GM10248 (cell line): ENCODE measurements at regions of chr14 and their contacts with region 1.

Region 1: GRCh38 chr14:66403183-66403582 is 83.0 kb upstream of the CCDC196 start:
- DNase-seq: peak; percentile 11
- CTCF ChIP-seq: peak; percentile 49

Region 2: DNA sequence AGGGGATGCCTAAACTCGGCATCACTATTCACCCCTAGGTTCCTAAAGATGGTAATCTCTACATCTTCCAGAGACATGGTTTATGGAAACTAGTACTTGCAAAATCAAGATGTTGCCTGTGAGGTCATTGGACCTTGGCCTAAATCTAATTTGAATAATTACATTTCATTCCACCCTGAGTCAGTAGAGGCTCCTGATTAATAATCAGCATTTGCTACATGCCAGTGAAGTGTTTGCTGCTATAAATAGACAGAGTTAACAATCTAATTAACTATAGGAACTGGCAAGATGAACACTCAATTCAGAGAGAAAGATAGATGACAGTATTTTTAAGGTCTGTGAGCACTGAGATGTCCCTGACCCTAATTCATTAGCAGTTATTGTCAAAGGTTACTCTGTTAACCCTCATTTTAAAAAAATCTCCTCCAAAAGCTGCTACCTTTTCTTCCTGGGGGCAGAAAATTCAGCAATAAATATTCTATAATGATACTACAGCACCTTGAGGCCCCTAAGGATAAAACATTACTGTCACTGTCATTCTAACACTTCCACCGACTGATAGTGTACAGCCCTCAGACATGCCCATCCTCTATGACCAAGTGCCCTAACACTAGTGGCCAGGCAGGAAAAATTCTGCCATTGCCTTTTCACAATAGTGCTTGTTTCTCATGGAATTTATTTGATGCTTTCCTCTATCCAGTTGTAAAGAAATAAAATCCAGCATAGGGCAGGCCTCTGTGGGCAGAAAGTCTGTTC is 17.2 kb after region 1 on chr14:
- CTCF ChIA-PET with region 1: interaction called, 25 read pairs
- POLR2A ChIA-PET with region 1: no interaction called
- DNase-seq: no peak
- CTCF ChIP-seq: no peak

Region 3: DNA sequence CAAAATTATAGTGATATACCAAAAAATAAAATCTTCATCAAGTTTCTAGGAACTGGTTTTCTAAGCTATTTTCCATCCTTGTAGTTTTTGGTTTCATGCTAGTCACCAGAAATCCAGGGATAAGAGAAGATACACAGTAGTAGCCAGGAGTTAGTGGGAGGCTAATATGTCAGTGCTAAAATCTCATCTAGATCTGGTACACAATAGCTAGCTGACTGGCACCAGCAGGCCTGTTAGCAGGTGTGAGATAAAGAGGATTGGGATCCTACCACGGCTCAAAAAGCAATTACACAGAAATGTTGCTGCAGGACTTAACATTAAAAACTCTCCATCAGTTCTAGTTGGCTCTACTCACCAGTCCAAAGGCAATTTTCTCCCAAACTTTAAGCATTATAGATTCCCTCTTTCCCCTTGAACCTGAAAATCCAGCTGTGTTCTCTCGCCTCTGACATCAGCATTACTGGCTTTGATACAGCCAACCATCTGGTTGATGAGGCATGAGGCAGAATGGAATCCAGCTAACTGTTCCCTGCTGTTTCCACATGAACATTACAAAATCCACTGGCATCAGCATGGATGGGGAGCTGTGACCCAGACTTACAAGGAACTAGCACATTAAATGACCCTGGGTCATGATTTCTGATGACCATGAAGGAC is 41.2 kb after region 1 on chr14:
- CTCF ChIA-PET with region 1: no interaction called
- POLR2A ChIA-PET with region 1: no interaction called
- DNase-seq: no peak
- CTCF ChIP-seq: no peak